ENCODE measurements at regions of chr1 and their contacts with region 1.

Region 1: DNA sequence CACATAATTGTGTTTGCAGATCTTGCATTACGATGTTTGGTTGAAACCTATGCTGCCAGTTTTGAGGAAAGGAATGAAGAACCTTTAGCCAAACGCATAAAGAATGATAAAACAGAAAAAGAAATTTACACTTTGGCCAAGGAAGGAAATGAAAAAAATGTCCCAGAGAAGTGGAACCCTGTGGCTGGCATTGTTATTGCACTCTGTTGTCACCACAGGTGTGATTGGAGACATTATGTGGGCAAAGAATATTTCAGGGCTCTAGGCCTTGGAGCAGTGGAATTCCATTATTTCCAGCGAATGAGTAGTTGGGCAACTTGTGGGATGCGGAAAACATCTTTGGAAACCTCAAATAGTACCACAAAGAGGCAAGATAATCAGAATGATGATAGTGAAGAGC is 14.9 kb downstream of the TRMT13 start:
- DNase-seq: no peak
- ATAC-seq: no peak
- H3K4me3 ChIP-seq: no peak overlapping the region
- H3K27ac ChIP-seq: no peak overlapping the region
- H3K4me1 ChIP-seq: no peaks in the 10 kb centered on the region
- H3K27me3 ChIP-seq: no peaks in the 10 kb centered on the region
- CTCF ChIP-seq: no peak

Region 2: GRCh38 chr1:99776120-99776519 is 371.8 kb before region 1 on chr1:
- intact Hi-C with region 1: no loop called
- DNase-seq: no peak
- ATAC-seq: no peak
- H3K4me3 ChIP-seq: no peak overlapping the region
- H3K27ac ChIP-seq: no peak overlapping the region
- H3K4me1 ChIP-seq: no peaks in the 10 kb centered on the region
- H3K27me3 ChIP-seq: peaks cover 0 to 2% (median 0%) of the 10 kb centered on the region in 3 donors
- CTCF ChIP-seq: no peak

Region 3: GRCh38 chr1:99886841-99887240 is 261.0 kb before region 1 on chr1:
- intact Hi-C with region 1: loop called in 1 of 2 experiments (anchors 5 kb)
- DNase-seq: no peak
- ATAC-seq: no peak
- H3K4me3 ChIP-seq: no peak overlapping the region
- H3K27ac ChIP-seq: no peak overlapping the region
- H3K4me1 ChIP-seq: no peaks in the 10 kb centered on the region
- H3K27me3 ChIP-seq: no peaks in the 10 kb centered on the region
- CTCF ChIP-seq: no peak

Measured in psoas muscle (tissue), 8 donors.